ENCODE measurements at regions of chr18 and their contacts with region 1.

Region 1: GRCh38 chr18:24488824-24489493 is 28.5 kb downstream of the HRH4 start:
- DNase-seq: no peak
- H3K4me3 ChIP-seq: no peak overlapping the region
- H3K27ac ChIP-seq: no peak overlapping the region
- H3K4me1 ChIP-seq: no peaks in the 10 kb centered on the region
- H3K27me3 ChIP-seq: no peaks in the 10 kb centered on the region
- CTCF ChIP-seq: peak; percentile 77

Region 2: GRCh38 chr18:24176727-24177416 is 312.1 kb before region 1 on chr18:
- CTCF ChIA-PET with region 1: interaction called, 4 read pairs
- POLR2A ChIA-PET with region 1: no interaction called
- intact Hi-C with region 1: loop called (anchors 10 kb)
- DNase-seq: peak in 1 of 2 experiments; percentile 21
- H3K4me3 ChIP-seq: no peak overlapping the region
- H3K27ac ChIP-seq: no peak overlapping the region
- H3K4me1 ChIP-seq: peaks cover 14% of the 10 kb centered on the region
- H3K27me3 ChIP-seq: no peaks in the 10 kb centered on the region
- CTCF ChIP-seq: peak; percentile 62

Region 3: DNA sequence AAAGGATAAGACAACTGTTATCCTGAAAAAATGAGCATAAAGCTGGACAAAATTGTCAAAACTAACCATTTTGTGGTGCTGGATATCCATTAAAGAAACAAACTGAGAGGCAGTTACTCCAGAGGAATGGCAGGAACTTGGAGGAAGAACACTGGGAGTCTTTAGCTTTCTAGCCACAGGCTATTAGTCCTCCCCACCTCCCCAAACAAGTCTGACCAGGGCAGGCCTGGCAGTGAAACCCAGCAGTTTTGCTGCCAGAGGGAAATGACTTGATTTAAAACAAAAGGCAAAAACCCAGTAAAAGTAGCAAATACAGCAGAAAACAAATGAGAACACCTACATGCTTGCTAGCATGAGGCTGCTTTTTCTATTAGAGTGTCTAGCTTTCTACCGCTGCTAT is 126.2 kb before region 1 on chr18:
- CTCF ChIA-PET with region 1: interaction called, 16 read pairs
- POLR2A ChIA-PET with region 1: no interaction called
- intact Hi-C with region 1: loop called (anchors 1 kb)
- DNase-seq: peak; percentile 52 to 72
- H3K4me3 ChIP-seq: no peak overlapping the region
- H3K27ac ChIP-seq: peak overlapping the region; percentile 49
- H3K4me1 ChIP-seq: peaks cover 16% of the 10 kb centered on the region
- H3K27me3 ChIP-seq: no peaks in the 10 kb centered on the region
- CTCF ChIP-seq: no peak

Region 4: DNA sequence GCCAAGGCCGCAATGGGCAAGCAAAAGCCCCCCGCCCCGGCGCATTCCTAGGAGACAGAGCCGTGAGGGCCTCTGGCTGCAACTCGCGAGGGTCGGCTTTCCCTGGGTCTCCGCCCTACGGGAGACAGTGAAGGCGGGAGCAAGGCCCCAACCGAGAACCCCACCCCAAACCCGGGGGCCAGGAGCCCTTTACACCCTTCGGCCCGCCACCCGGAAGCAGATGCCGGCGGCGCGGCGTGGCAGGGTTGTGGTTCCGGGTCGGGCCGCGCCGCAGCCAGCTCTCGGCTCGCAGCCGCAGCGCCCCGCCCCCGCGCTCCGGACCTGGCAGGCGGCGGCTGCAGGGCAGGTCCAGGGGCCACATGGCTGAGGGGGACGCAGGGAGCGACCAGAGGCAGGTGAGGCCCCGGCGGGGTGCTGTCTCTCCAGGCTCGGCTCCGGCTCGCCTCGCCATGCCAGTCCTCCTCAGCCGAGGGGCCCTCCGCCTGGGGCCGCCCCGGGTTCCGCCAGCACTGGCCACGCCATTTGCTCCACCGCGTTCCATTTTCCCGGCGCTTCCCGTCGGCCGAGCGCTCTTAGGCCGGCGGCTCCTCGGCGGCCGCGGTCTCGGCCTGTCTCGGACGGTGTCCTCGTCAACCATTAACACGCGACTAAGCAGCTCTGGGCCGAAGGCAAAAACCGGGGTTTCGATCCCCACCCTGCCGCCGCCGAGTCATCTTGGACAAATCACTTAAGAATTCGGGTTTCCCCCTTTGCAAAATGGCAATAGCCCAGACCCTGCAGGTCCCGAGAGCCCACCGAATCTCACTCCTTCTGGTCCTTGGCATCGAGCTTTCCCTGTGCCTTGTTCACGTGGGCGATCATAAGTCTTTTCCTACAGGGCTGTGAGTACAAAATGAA is 62.3 kb before region 1 on chr18 and contains the start of gene IMPACT:
- CTCF ChIA-PET with region 1: no interaction called
- POLR2A ChIA-PET with region 1: no interaction called
- intact Hi-C with region 1: no loop called
- DNase-seq: peak; percentile 52 to 77
- H3K4me3 ChIP-seq: peak within 1 kb of the TSS; percentile 84
- H3K27ac ChIP-seq: peak within 1 kb of the TSS; percentile 77
- H3K4me1 ChIP-seq: peaks cover 10% of the 10 kb centered on the region
- H3K27me3 ChIP-seq: no peaks in the 10 kb centered on the region
- CTCF ChIP-seq: no peak
- total RNA-seq, gene IMPACT: 29.0 and 32.9 TPM in 2 replicates

Region 5: DNA sequence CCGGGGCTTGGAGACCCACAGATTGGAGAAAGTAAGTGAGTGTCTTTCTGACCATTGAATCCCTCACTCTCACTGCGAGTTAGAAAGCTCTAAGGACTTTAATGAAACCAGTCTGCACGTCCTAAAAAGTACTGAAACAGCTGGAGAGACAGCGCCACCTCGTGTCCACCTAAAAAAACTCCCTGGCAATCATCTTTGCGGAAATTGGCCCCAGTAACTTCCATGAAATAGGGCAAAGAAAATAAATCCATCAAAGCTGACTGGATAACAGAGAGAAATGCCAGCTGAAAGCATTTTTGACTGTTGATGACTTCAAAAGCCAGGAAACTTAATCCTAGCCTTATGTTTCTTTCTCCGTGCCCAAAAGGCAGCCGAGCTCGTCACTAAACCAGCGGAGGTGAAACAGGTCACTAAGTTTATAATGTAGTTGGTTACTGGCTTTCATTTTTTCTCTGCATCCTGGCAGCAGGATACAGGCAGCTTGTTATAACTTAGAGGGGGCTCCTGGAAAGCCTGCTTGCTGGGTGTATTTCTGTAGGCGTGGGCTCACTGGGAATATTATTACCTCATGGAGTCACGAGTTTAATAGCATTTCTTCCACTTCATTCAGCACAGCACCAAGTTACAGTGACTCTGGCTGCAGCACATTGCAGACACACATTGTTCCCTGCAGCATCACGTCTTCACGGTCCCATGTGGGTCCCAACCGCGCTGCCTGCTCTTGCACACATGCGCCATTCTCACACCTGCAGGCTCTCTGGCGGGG is 238.0 kb after region 1 on chr18:
- CTCF ChIA-PET with region 1: interaction called, 5 read pairs
- POLR2A ChIA-PET with region 1: no interaction called
- intact Hi-C with region 1: loop called (anchors 2 kb)
- DNase-seq: peak; percentile 36 to 37
- H3K4me3 ChIP-seq: no peak overlapping the region
- H3K27ac ChIP-seq: no peak overlapping the region
- H3K4me1 ChIP-seq: no peaks in the 10 kb centered on the region
- H3K27me3 ChIP-seq: peaks cover 3% of the 10 kb centered on the region; the same call in 1 of the 2 replicates
- CTCF ChIP-seq: peak; percentile 74

Region 6: GRCh38 chr18:25780105-25780504 is 1291.1 kb after region 1 on chr18:
- CTCF ChIA-PET with region 1: no interaction called
- POLR2A ChIA-PET with region 1: interaction called, 10 read pairs
- intact Hi-C with region 1: no loop called
- DNase-seq: no peak
- H3K4me3 ChIP-seq: no peak overlapping the region
- H3K27ac ChIP-seq: no peak overlapping the region
- H3K4me1 ChIP-seq: no peaks in the 10 kb centered on the region
- H3K27me3 ChIP-seq: no peaks in the 10 kb centered on the region
- CTCF ChIP-seq: no peak